BJ (cell line): ENCODE measurements at regions of chr1 and their contacts with region 1.

Region 1: DNA sequence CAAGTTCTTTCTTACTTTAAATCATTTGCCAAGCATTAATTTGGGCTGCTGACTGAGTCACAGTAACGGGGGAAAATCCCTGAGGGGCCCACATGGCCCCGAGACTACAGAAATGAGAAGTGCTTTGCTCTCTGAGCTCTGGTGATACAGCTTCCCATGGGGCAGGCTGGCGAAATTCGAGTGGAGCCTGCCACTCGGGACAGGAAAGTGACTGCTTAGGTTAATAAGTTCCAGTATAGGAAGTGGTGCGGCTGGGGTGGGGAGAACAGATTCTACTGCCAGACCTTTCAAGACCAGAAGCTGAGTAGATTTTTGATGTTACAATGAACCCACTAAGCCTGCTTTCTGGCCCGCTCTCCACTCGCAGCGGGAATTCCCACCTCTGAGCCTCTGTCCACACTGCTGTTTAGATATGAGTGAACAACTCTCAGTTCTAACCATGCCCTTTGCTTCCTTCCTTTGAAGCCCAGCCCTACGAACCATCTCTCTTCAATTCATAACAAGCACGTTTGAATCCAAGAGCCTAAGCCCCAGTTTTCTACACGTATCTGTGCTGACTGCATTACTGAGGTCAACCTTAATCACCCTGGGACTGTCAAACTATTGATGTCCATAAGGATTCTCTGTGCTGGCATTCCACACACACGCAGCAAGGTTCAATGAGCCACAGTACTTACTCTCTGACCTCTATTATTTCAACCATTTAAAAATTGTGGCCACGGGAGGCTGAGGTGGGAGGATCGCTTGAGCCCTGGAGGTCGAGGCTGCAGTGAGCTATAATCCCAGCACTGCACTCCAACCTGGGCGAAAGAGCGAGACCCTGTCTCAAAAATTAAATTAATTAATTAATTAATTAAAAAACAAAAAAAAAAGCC is 9.6 kb downstream of the ZBTB17 start:
- DNase-seq: no peak
- H3K4me3 ChIP-seq: no peak overlapping the region
- H3K27me3 ChIP-seq: no peaks in the 10 kb centered on the region
- CTCF ChIP-seq: no peak

Region 2: GRCh38 chr1:15843826-15844572 is 122.3 kb before region 1 on chr1:
- CTCF ChIA-PET with region 1: no interaction called
- POLR2A ChIA-PET with region 1: interaction called, 20 read pairs
- DNase-seq: no peak
- H3K4me3 ChIP-seq: no peak overlapping the region
- H3K27me3 ChIP-seq: no peaks in the 10 kb centered on the region
- CTCF ChIP-seq: no peak

Region 3: DNA sequence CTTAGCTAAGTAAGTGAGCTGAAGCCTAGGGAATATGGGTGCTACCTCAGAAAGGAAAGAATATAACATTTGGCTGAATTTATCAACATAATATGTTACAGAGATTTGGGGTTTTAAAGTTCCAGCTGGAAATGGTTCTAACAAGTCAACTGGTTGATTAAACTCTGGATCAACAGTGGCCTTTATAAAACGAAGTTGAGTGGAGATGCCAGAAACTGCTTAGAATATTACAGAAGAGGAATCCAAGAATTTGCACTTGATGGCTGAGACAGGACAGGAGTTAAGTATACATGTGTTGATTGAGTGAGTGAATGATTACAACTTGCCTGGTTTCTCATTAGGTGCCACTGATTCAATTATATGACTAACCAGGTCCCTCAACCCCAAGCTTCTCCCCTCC is 17.0 kb after region 1 on chr1:
- CTCF ChIA-PET with region 1: no interaction called
- POLR2A ChIA-PET with region 1: no interaction called
- DNase-seq: no peak
- H3K4me3 ChIP-seq: no peak overlapping the region
- H3K27me3 ChIP-seq: no peaks in the 10 kb centered on the region
- CTCF ChIP-seq: no peak

Region 4: GRCh38 chr1:15997637-15998240 is 31.4 kb after region 1 on chr1:
- CTCF ChIA-PET with region 1: no interaction called
- POLR2A ChIA-PET with region 1: no interaction called
- DNase-seq: no peak
- H3K4me3 ChIP-seq: no peak overlapping the region
- H3K27me3 ChIP-seq: peaks cover 3% of the 10 kb centered on the region
- CTCF ChIP-seq: no peak